Endothelial cell of umbilical vein (primary cell): ENCODE measurements at regions of chr13 and their contacts with region 1.

Region 1: GRCh38 chr13:102751886-102752285 is 21.7 kb downstream of the TEX30 start:
- DNase-seq: no peak
- H3K4me3 ChIP-seq: no peak overlapping the region
- H3K27ac ChIP-seq: no peak overlapping the region
- H3K4me1 ChIP-seq: no peaks in the 10 kb centered on the region
- H3K27me3 ChIP-seq: peaks cover 0 to 4% of the 10 kb centered on the region in 2 experiments
- CTCF ChIP-seq: no peak
- POLR2A ChIP-seq: no peak

Region 2: GRCh38 chr13:102571075-102571474 is 180.8 kb before region 1 on chr13:
- CTCF ChIA-PET with region 1: no interaction called
- POLR2A ChIA-PET with region 1: no interaction called
- dilution Hi-C with region 1: no loop called
- intact Hi-C with region 1: no loop called
- DNase-seq: no peak
- H3K4me3 ChIP-seq: no peak overlapping the region
- H3K27ac ChIP-seq: no peak overlapping the region
- H3K4me1 ChIP-seq: no peaks in the 10 kb centered on the region
- H3K27me3 ChIP-seq: peaks cover 13 to 18% of the 10 kb centered on the region in 2 experiments
- CTCF ChIP-seq: no peak
- POLR2A ChIP-seq: no peak

Region 3: GRCh38 chr13:102707465-102707864 is 44.4 kb before region 1 on chr13:
- CTCF ChIA-PET with region 1: no interaction called
- POLR2A ChIA-PET with region 1: no interaction called
- dilution Hi-C with region 1: no loop called
- intact Hi-C with region 1: no loop called
- DNase-seq: peak; percentile 93
- H3K4me3 ChIP-seq: no peak overlapping the region
- H3K27ac ChIP-seq: peak overlapping the region; percentile 59
- H3K4me1 ChIP-seq: peaks cover 48% of the 10 kb centered on the region
- H3K27me3 ChIP-seq: no peaks in the 10 kb centered on the region
- CTCF ChIP-seq: no peak
- POLR2A ChIP-seq: no peak

Region 4: DNA sequence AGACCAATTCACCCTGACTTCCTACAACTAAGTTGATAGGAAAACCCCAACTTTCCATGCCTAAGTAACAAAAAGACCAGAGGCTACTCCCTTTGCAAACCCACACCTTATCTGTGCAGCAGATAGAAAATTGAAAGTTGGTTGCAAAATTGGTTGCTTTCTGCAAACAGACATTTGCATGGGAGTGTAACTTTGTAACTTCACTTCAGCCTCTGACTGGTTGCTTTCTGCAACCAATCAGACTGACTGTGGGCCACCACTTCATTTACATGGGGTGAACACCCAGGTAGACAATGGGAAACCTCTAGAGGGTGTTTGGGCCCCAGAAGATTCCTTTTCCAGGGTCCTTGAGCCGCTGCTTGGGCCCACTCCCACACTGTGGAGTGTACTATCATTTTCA is 11.9 kb after region 1 on chr13:
- CTCF ChIA-PET with region 1: no interaction called
- POLR2A ChIA-PET with region 1: no interaction called
- dilution Hi-C with region 1: no loop called
- intact Hi-C with region 1: loop called (anchors 2 kb)
- DNase-seq: no peak
- H3K4me3 ChIP-seq: no peak overlapping the region
- H3K27ac ChIP-seq: no peak overlapping the region
- H3K4me1 ChIP-seq: no peaks in the 10 kb centered on the region
- H3K27me3 ChIP-seq: no peaks in the 10 kb centered on the region
- CTCF ChIP-seq: no peak
- POLR2A ChIP-seq: no peak